Heart right ventricle (tissue), 16 donors: ENCODE measurements at regions of chr14 and their contacts with region 1.

Region 1: DNA sequence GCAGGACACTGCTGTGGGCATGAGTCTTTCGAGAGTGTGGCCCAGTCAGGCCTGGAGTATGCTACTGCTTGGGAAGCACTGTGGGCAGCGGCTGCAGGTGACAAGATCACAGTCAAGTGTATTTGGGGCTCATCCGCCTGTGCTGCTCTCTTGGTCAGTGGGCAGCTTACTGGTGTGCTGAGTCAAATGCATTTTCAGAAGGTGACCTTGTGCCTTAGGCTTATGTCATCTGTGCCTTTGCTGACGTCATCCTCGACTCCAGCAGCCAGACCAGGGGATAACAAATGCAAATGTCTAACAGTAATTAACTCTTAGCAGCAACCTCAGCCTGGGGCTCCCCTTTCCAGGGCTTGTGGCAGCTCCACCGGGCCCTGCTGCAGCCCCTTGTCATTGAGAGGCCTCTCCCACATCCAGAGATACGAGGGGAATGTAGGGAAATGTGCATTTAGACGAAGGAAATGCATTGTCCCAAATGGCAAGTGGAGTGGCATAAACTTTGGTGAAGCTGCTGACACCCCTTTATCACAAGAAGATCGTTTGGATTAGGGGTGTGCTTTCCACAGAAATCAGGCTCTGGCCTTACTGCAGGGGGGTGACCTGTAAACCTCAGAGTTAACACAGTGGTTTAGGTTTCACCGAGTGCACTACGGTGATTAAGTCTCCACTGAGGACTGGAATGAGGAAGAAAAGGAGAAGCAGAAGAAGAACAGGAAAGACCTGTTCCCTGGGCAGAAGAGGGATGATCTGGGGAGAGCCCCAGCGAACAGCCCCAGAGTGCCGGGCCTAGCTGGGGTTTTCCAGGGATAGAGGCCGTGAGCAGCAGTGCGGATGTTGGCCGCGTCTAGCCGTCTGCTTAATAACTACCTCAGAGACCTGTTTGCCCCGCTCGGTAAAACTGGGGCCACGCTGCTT is 39.7 kb downstream of the PSMA6 start:
- DNase-seq: no peak
- ATAC-seq: no peak
- H3K4me3 ChIP-seq: no peak overlapping the region
- H3K27ac ChIP-seq: peak overlapping the region in 2 of 10 donors; percentile 28 to 64
- H3K4me1 ChIP-seq: peaks cover 14 to 52% (median 39%) of the 10 kb centered on the region in 9 donors
- H3K27me3 ChIP-seq: no peaks in the 10 kb centered on the region
- CTCF ChIP-seq: no peak

Region 2: GRCh38 chr14:34548472-34548981 is 783.3 kb before region 1 on chr14:
- intact Hi-C with region 1: no loop called
- DNase-seq: no peak
- ATAC-seq: no peak
- H3K4me3 ChIP-seq: no peak overlapping the region
- H3K27ac ChIP-seq: peak overlapping the region in 2 of 10 donors; percentile 15 to 16
- H3K4me1 ChIP-seq: peaks cover 0 to 11% (median 0%) of the 10 kb centered on the region in 9 donors
- H3K27me3 ChIP-seq: no peaks in the 10 kb centered on the region
- CTCF ChIP-seq: no peak

Region 3: DNA sequence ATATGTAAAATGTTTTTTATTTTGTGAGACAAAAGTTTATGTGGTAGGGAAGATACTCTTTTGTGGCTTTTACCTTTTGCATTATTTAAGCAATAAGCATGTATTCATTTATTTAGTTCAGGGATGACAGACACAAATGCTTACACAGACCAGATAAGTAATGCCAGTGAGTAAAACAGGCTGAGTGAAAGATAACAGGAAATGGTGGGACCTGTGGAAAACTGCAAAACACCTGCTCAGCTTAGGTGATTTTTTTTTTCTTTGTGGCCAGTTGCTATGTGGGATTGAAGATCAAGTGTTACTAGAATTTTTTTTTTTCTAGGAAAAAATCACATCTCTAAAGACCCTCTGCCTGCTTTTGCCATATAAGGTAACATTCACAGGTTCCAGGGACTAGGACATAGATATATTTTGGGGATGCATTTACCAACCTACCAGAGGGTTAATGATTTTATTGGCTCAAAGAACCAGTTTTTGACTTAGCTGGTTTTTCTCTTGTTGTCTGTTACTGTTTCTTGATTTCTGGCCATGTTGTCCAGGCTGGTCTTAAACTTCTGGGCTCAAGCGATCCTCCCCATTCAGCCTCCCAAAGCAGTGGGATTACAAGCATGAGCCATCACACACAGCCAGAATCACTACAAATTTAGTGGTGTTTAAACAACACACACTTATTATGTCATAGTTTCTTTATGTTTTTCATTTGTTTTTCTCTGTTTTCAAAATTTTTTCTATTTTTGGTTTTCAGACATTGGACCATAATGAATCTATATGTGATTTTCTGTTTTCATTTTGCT is 29.9 kb before region 1 on chr14:
- intact Hi-C with region 1: loop called in 2 of 10 experiments (anchors 5 kb)
- DNase-seq: no peak
- ATAC-seq: no peak
- H3K4me3 ChIP-seq: no peak overlapping the region
- H3K27ac ChIP-seq: peak overlapping the region in 2 of 10 donors; percentile 35 to 39
- H3K4me1 ChIP-seq: peaks cover 0 to 79% (median 37%) of the 10 kb centered on the region in 9 donors
- H3K27me3 ChIP-seq: no peaks in the 10 kb centered on the region
- CTCF ChIP-seq: no peak